A549 (cell line): ENCODE measurements at regions of chr1 and their contacts with region 1.

Region 1: DNA sequence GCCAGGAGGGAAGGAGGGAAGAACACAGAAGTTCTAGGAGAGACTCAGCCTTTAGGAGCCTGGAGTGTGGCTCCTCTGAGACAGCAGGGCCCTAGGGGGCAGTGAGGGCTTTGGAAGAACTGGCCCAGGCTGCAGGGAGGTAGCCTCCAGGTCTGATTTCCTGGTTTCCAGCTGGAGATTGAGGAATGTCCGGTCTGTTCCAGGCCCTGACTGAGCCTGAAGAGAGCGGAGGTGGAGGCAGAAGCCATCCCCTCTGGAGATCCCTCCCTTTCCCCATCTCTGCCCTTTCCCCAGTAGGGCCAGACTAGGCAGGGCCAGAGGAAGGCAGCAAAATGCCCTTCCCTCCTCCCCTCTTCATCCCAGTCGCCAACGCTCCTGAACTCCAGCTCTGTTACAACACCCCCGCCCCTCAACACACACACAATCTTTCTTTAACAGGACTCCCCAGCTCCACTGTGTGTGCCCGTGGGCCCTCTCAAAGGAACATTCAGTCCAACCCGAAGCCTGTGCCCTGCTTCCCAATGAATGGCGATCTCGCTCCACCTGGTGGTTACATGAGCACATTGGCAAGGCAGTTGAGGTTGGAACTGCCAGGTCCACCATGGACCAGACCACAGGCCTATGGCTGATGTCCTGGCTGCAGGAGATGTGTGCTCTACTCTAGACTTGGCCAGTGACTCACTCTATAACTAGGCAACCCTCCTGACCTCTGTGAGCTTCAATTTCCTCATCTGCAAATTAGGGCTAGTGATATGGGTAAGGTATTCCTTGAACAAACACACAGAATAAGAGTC is 32.0 kb downstream of the MAP7D1 start:
- DNase-seq: peak; percentile 81 to 88
- ATAC-seq: peak; percentile 96 to 98
- H3K4me3 ChIP-seq: no peak overlapping the region
- H3K27ac ChIP-seq: peak overlapping the region; percentile 88 to 90
- H3K4me1 ChIP-seq: peaks cover 8% of the 10 kb centered on the region
- CTCF ChIP-seq: peak; percentile 68
- EP300 ChIP-seq: no peak
- POLR2A ChIP-seq: no peak
- RAD21 ChIP-seq: peak; percentile 89 to 92

Region 2: DNA sequence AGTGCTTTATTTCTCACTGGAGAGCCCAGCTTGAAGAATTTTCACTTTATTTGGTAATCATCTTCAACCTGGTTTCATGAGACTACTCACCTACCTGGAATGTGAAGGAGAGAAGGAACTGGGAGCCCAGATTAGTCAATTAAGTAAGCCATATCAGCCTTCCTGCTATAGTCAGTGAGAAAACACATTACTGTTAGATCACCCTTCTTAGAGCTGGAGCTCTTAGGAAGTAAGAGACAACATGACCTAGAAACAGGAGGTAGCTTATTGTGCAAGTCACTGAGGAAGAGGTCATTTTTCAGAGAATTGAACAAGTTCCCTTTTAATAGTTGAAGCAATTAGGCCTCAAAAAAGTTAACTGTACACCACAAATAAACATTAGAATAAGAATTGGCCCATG is 153.3 kb before region 1 on chr1:
- CTCF ChIA-PET with region 1: no interaction called
- POLR2A ChIA-PET with region 1: no interaction called
- DNase-seq: peak; percentile 2 to 21
- ATAC-seq: peak in 1 of 2 experiments; percentile 33; a peak in 2 of 6 replicates
- H3K4me3 ChIP-seq: no peak overlapping the region
- H3K27ac ChIP-seq: no peak overlapping the region
- H3K4me1 ChIP-seq: peaks cover 6% of the 10 kb centered on the region; the same call in 1 of the 3 replicates
- CTCF ChIP-seq: no peak
- EP300 ChIP-seq: no peak
- POLR2A ChIP-seq: no peak
- RAD21 ChIP-seq: no peak

Region 3: GRCh38 chr1:36143424-36143823 is 44.6 kb before region 1 on chr1:
- CTCF ChIA-PET with region 1: interaction called, 114 read pairs
- POLR2A ChIA-PET with region 1: no interaction called
- DNase-seq: no peak
- ATAC-seq: no peak
- H3K4me3 ChIP-seq: no peak overlapping the region
- H3K27ac ChIP-seq: no peak overlapping the region
- H3K4me1 ChIP-seq: peaks cover 7% of the 10 kb centered on the region
- CTCF ChIP-seq: no peak
- EP300 ChIP-seq: no peak
- POLR2A ChIP-seq: no peak
- RAD21 ChIP-seq: no peak

Region 4: GRCh38 chr1:36160949-36161485 is 27.0 kb before region 1 on chr1:
- CTCF ChIA-PET with region 1: interaction called, 71 read pairs
- POLR2A ChIA-PET with region 1: interaction called, 7 read pairs
- DNase-seq: peak; percentile 47 to 48
- ATAC-seq: peak; percentile 65 to 76
- H3K4me3 ChIP-seq: peak overlapping the region; percentile 33
- H3K27ac ChIP-seq: peak overlapping the region; percentile 77 to 83
- H3K4me1 ChIP-seq: peaks cover 61% of the 10 kb centered on the region
- CTCF ChIP-seq: peak; percentile 37
- EP300 ChIP-seq: no peak
- POLR2A ChIP-seq: no peak
- RAD21 ChIP-seq: peak in 1 of 2 experiments; percentile 14; a peak in 1 of 5 replicates

Region 5: GRCh38 chr1:36199934-36200741 is 12.1 kb after region 1 on chr1:
- CTCF ChIA-PET with region 1: interaction called, 11 read pairs
- POLR2A ChIA-PET with region 1: no interaction called
- DNase-seq: no peak
- ATAC-seq: peak; percentile 9 to 33; a peak in 4 of 6 replicates
- H3K4me3 ChIP-seq: no peak overlapping the region
- H3K27ac ChIP-seq: peak overlapping the region; percentile 70 to 76; a peak in 4 of 6 replicates
- H3K4me1 ChIP-seq: peaks cover 45% of the 10 kb centered on the region
- CTCF ChIP-seq: no peak
- EP300 ChIP-seq: no peak
- POLR2A ChIP-seq: no peak
- RAD21 ChIP-seq: no peak

Region 6: DNA sequence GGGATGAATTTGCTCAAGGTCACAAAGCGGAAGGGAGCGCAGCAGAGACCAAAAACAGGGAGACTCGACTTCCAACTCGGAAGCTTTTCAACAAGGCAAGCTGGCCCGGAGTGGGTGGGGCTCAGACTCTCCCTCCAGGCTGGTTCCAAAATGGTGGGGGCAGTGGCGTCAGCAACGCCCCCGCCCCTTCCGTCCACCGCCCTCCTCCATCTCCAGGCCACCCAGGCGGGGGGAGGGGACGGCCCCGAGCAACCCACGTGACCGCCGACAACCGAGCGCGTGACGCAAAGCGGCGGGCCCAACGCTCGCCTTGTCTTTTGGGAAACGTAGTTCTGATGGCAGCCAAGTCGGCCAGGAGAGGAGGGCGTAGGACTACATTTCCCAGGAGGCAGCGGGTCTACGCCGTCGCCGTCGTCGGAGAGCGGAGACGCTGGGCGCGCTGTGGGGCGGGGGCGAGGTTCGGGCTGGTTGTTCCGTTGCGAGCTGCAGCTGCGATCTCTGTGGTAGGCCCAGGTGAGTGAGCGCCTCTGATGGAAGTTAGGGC is 36.1 kb after region 1 on chr1 and contains the start of gene THRAP3:
- CTCF ChIA-PET with region 1: interaction called, 10 read pairs
- POLR2A ChIA-PET with region 1: no interaction called
- DNase-seq: peak; percentile 89 to 99
- ATAC-seq: peak; percentile 96 to 97
- H3K4me3 ChIP-seq: peak within 1 kb of the TSS; percentile 65
- H3K27ac ChIP-seq: peak within 1 kb of the TSS; percentile 93 to 98
- H3K4me1 ChIP-seq: peaks cover 19% of the 10 kb centered on the region
- CTCF ChIP-seq: no peak
- EP300 ChIP-seq: no peak
- POLR2A ChIP-seq: peak; percentile 46
- RAD21 ChIP-seq: no peak; a peak in 1 of 5 replicates
- polyA plus RNA-seq, gene THRAP3: 60.7 and 66.5 TPM in 2 replicates

Region 7: GRCh38 chr1:36285448-36286101 is 97.6 kb after region 1 on chr1:
- CTCF ChIA-PET with region 1: interaction called, 24 read pairs
- POLR2A ChIA-PET with region 1: no interaction called
- DNase-seq: peak; percentile 73 to 84
- ATAC-seq: peak; percentile 92 to 96
- H3K4me3 ChIP-seq: no peak overlapping the region
- H3K27ac ChIP-seq: peak overlapping the region in 1 of 2 experiments; percentile 43; a peak in 2 of 6 replicates
- H3K4me1 ChIP-seq: peaks cover 28% of the 10 kb centered on the region; the same call in 2 of the 3 replicates
- CTCF ChIP-seq: peak; percentile 81
- EP300 ChIP-seq: no peak
- POLR2A ChIP-seq: no peak
- RAD21 ChIP-seq: peak; percentile 77 to 85